Psoas muscle (tissue), 8 donors: ENCODE measurements at regions of chr16 and their contacts with region 1.

Region 1: DNA sequence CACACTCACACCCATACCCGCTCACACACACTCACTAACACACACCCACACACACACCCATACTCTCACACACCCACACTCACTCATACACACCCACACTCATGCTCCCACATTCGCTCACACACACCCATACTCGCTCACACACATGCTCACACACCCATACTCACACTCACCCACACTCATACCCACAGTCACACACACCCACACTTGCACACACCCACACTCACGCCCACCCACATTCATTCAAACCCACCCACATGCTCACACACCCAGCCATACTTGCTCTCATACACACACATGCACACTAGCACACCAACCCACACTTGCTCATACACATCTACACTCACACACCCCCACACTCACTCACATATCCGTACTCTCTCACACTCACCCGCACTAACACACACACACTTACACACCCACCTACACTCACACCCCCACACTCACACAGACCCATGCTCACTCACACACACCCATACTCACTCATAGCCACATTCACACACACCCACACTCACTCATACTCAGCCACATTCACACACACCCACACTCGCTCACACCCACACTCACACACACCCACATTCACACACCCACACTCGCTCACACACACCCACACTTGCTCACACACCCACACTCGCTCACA is 322.4 kb upstream of the N4BP1 start:
- DNase-seq: no peak
- ATAC-seq: no peak
- H3K4me3 ChIP-seq: no peak overlapping the region
- H3K27ac ChIP-seq: no peak overlapping the region
- H3K4me1 ChIP-seq: no peaks in the 10 kb centered on the region
- H3K27me3 ChIP-seq: no peaks in the 10 kb centered on the region
- CTCF ChIP-seq: no peak

Region 2: GRCh38 chr16:48879223-48880122 is 52.9 kb before region 1 on chr16:
- intact Hi-C with region 1: loop called in 1 of 2 experiments (anchors 10 kb)
- DNase-seq: no peak
- ATAC-seq: no peak
- H3K4me3 ChIP-seq: no peak overlapping the region
- H3K27ac ChIP-seq: no peak overlapping the region
- H3K4me1 ChIP-seq: no peaks in the 10 kb centered on the region
- H3K27me3 ChIP-seq: peaks cover 0 to 2% (median 0%) of the 10 kb centered on the region in 3 donors
- CTCF ChIP-seq: no peak